HCT116 (cell line): ENCODE measurements at regions of chr19 and their contacts with region 1.

Region 1: GRCh38 chr19:30227661-30228428 is 144.3 kb upstream of the ZNF536 start:
- DNase-seq: peak; percentile 13
- ATAC-seq: peak; percentile 94
- H3K4me3 ChIP-seq: peak overlapping the region; percentile 21 to 59
- H3K27ac ChIP-seq: no peak overlapping the region
- H3K4me1 ChIP-seq: peaks cover 2 to 8% of the 10 kb centered on the region in 2 experiments; a peak in 2 of 4 replicates
- H3K27me3 ChIP-seq: peaks cover 19% of the 10 kb centered on the region; the same call in 1 of the 2 replicates
- CTCF ChIP-seq: peak; percentile 10 to 42 (median 41); a peak in 4 of 6 replicates
- POLR2A ChIP-seq: no peak
- RAD21 ChIP-seq: peak; percentile 48

Region 2: DNA sequence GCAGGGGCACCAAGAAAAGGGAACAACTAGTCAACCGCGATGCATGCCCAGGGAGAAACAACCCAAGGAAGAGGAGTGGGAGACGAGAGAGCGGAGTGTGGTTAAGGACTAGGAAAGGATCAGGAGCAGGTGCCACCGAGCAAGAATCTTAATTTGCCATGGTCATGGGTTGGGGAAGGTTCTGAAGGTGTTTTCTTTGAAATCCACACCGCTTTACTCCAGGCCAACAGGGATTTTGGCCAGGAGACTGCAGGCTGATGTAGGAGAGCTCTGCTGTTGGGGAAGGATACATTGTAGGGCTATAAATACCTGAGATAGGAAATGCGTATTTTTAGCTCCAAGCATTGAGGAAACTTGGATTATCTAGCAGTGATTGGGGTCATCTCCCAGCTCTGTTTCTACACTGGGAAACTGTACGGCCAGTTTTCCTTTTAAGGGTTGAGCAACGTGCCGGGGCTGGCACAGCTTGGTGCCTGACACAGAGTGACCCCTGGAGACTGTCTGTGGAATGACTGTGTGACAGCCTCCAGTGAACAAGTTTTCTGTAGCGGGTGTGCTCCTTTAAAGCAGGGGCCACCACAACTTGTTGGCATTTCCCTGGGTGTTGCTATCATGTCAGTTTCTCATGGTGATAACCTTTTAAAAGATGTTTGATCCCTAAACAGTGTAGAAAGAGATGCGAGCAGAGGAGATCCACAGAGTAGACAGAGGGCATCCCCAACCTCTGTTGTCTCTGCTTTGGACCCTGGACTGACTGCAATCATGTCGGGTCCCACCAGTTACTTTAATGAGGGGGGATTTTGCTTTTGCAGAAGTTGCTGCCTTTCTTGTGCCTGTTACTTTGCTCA is 178.6 kb after region 1 on chr19:
- CTCF ChIA-PET with region 1: no interaction called
- POLR2A ChIA-PET with region 1: no interaction called
- RAD21 ChIA-PET with region 1: no interaction called
- intact Hi-C with region 1: loop called (anchors 10 kb)
- DNase-seq: no peak
- ATAC-seq: peak; percentile 72
- H3K4me3 ChIP-seq: no peak overlapping the region
- H3K27ac ChIP-seq: no peak overlapping the region
- H3K4me1 ChIP-seq: no peaks in the 10 kb centered on the region
- H3K27me3 ChIP-seq: no peaks in the 10 kb centered on the region
- CTCF ChIP-seq: peak in 2 of 3 experiments; percentile 35 to 37; a peak in 4 of 6 replicates
- POLR2A ChIP-seq: no peak
- RAD21 ChIP-seq: peak; percentile 45; the same call in 1 of the 2 replicates

Region 3: DNA sequence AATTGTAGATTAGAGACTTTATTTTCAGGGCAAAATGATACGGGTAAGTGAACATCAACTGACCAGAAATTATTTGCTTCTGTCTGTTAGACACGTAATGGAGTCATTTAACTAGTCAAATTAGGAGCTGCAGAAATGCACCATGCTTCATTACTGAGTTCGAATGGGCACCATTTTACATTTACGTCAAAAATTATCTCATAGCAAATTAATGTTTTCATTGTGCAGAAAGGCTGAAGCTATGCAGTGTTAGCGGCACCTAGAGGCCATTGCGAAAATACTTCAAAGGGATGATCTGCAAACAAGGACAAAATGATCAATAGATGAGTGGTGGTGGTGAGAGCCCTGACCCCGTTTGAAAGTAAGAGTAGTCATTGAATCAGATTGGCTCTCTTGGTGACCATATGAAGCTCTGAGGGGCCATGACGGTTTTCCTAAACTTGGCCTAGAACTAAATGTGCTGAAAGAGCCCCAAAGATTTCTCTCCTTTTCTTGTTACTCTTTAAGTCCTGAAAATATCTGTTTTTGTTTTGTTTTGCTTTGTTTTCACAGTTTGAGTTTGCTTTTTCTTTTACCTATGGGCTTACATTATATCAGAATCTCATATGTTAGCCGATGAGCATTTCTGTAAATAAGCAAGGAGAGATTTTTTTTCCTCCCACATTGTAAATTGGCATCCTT is 422.2 kb after region 1 on chr19:
- CTCF ChIA-PET with region 1: no interaction called
- POLR2A ChIA-PET with region 1: no interaction called
- RAD21 ChIA-PET with region 1: no interaction called
- intact Hi-C with region 1: loop called (anchors 5 kb)
- DNase-seq: peak; percentile 46
- ATAC-seq: peak; percentile 75
- H3K4me3 ChIP-seq: no peak overlapping the region
- H3K27ac ChIP-seq: no peak overlapping the region
- H3K4me1 ChIP-seq: no peaks in the 10 kb centered on the region
- H3K27me3 ChIP-seq: peaks cover 12% of the 10 kb centered on the region; the same call in 1 of the 2 replicates
- CTCF ChIP-seq: peak; percentile 46 to 86 (median 76); a peak in 5 of 6 replicates
- POLR2A ChIP-seq: no peak
- RAD21 ChIP-seq: peak; percentile 67